ENCODE measurements at regions of chr2 and their contacts with region 1.

Region 1: DNA sequence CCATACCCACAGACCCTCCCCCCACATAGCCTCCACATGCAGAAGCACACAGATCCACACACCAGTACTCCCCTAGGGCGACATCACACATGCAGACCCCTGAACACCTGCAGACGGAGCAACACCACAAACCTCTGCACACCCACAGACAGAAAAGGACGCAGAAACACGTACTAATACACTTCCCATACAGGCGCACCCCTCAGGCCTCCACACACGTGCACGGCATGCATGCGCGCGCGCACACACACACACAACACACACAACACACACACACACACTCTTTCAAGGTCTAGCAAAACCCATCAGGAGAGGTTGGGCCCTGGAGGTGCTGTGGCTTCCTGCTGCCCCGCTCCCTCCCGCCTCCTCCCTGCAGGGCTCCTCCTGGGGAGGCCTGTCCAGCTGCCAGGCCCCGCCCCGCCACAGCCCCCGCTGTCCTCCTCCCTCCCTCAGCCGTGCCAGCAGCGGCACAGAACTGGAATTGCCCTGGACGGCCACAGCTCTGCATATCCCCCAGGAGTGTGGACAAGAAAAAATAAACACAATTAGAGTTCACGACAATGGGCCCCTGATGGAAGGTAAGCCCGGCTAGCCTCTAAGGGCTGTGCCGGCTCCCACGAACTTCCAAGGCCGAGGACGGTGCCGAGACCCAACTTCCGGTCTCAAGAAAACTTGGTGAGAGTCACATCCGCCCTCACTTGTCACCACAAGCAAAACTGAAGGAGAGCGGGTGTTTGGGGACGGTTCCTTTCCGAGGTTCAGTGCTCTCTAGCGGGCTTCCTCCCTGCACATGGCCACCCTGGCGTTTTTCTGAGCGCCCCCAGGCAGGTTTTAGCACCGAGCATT is 6.8 kb downstream of the ZFP36L2 start:
- DNase-seq: peak; percentile 88
- H3K4me3 Mint-ChIP-seq: peak overlapping the region; percentile 93
- H3K27ac Mint-ChIP-seq: peak overlapping the region; percentile 83
- H3K4me1 Mint-ChIP-seq: peaks cover 22% of the 10 kb centered on the region
- H3K27me3 Mint-ChIP-seq: no peaks in the 10 kb centered on the region
- CTCF ChIP-seq: no peak

Region 2: GRCh38 chr2:42792583-42793333 is 426.8 kb before region 1 on chr2 and contains the start of gene HAAO:
- CTCF ChIA-PET with region 1: no interaction called
- POLR2A ChIA-PET with region 1: no interaction called
- intact Hi-C with region 1: no loop called
- DNase-seq: no peak
- H3K4me3 Mint-ChIP-seq: no peak within 1 kb of the TSS
- H3K27ac Mint-ChIP-seq: no peak within 1 kb of the TSS
- H3K4me1 Mint-ChIP-seq: peaks cover 13% of the 10 kb centered on the region
- H3K27me3 Mint-ChIP-seq: no peaks in the 10 kb centered on the region
- CTCF ChIP-seq: no peak
- total RNA-seq, gene HAAO: not detected in 2 replicates

Region 3: GRCh38 chr2:42944779-42945415 is 274.7 kb before region 1 on chr2:
- CTCF ChIA-PET with region 1: interaction called, 25 read pairs
- POLR2A ChIA-PET with region 1: interaction called, 11 read pairs
- intact Hi-C with region 1: no loop called
- DNase-seq: no peak
- H3K4me3 Mint-ChIP-seq: no peak overlapping the region
- H3K27ac Mint-ChIP-seq: no peak overlapping the region
- H3K4me1 Mint-ChIP-seq: peaks cover 10% of the 10 kb centered on the region
- H3K27me3 Mint-ChIP-seq: no peaks in the 10 kb centered on the region
- CTCF ChIP-seq: no peak

Region 4: DNA sequence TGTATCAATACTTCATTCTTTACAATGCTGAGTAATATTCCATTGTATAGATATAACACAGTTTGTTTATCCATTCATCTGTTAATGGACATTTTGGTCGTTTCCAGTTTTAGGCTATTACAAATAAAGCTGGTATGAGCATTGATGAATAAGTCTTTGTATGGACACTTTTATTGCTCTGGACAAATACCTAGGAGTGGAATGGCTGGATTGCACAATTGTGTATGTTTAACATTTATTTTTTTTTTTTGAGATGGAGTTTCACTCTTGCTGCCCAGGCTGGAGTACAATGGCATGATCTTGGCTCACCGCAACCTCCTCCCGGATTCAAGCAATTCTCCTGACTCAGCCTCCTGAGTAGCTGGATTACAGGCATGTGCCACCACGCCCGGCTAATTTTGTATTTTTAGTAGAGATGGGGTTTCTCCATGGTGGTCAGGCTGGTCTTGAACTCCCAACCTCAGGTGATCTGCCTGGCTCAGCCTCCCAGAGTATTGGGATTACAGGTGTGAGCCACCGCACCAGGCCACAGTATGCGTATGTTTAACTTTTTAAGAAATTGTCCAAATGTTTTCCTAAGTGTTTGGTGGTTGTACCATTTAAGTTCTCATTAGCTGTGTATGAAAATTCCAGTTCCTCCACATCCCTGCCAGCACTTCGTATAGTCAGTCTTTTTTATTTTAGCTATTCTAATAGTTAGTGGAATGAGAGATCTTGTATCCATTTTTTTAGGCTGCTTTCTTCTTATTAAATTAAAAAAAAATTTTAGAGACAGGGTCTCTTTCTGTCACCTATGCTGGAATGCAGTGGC is 232.3 kb before region 1 on chr2:
- CTCF ChIA-PET with region 1: interaction called, 3 read pairs
- POLR2A ChIA-PET with region 1: interaction called, 28 read pairs
- intact Hi-C with region 1: no loop called
- DNase-seq: peak; percentile 88
- H3K4me3 Mint-ChIP-seq: no peak overlapping the region
- H3K27ac Mint-ChIP-seq: peak overlapping the region; percentile 90
- H3K4me1 Mint-ChIP-seq: peaks cover 19% of the 10 kb centered on the region
- H3K27me3 Mint-ChIP-seq: no peaks in the 10 kb centered on the region
- CTCF ChIP-seq: no peak

Region 5: DNA sequence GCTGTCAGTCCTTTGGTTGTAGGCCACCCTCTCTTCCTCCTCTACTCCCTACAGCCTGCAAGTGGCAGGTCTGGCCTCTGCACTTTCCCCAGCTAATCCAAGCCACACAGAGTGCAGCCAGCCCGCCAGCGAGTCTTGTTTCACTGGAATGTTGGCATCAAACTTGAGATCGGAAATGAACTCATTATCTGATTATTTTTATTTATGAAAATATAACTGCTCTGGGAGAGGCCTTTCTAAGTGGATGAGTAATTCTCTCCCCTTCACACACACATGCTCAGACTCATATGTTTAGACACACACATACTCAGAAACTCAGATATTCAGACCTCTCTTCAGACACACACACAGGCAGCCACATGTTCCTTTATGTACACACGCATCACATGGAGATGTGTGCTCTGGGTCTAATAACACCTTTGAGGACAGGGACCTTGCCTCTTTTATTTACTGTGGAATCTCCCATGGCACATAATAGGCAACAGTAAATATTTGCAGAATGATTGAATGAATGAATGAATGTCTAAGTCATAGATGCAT is 144.5 kb before region 1 on chr2:
- CTCF ChIA-PET with region 1: interaction called, 7 read pairs
- POLR2A ChIA-PET with region 1: interaction called, 64 read pairs
- intact Hi-C with region 1: no loop called
- DNase-seq: peak; percentile 96
- H3K4me3 Mint-ChIP-seq: peak overlapping the region; percentile 76
- H3K27ac Mint-ChIP-seq: peak overlapping the region; percentile 89
- H3K4me1 Mint-ChIP-seq: peaks cover 64% of the 10 kb centered on the region
- H3K27me3 Mint-ChIP-seq: no peaks in the 10 kb centered on the region
- CTCF ChIP-seq: no peak

Region 6: GRCh38 chr2:43158259-43158880 is 61.2 kb before region 1 on chr2:
- CTCF ChIA-PET with region 1: interaction called, 6 read pairs
- POLR2A ChIA-PET with region 1: interaction called, 60 read pairs
- intact Hi-C with region 1: loop called (anchors 1 kb)
- DNase-seq: peak; percentile 92
- H3K4me3 Mint-ChIP-seq: peak overlapping the region; percentile 62
- H3K27ac Mint-ChIP-seq: peak overlapping the region; percentile 98
- H3K4me1 Mint-ChIP-seq: peaks cover 57% of the 10 kb centered on the region
- H3K27me3 Mint-ChIP-seq: no peaks in the 10 kb centered on the region
- CTCF ChIP-seq: no peak

Region 7: DNA sequence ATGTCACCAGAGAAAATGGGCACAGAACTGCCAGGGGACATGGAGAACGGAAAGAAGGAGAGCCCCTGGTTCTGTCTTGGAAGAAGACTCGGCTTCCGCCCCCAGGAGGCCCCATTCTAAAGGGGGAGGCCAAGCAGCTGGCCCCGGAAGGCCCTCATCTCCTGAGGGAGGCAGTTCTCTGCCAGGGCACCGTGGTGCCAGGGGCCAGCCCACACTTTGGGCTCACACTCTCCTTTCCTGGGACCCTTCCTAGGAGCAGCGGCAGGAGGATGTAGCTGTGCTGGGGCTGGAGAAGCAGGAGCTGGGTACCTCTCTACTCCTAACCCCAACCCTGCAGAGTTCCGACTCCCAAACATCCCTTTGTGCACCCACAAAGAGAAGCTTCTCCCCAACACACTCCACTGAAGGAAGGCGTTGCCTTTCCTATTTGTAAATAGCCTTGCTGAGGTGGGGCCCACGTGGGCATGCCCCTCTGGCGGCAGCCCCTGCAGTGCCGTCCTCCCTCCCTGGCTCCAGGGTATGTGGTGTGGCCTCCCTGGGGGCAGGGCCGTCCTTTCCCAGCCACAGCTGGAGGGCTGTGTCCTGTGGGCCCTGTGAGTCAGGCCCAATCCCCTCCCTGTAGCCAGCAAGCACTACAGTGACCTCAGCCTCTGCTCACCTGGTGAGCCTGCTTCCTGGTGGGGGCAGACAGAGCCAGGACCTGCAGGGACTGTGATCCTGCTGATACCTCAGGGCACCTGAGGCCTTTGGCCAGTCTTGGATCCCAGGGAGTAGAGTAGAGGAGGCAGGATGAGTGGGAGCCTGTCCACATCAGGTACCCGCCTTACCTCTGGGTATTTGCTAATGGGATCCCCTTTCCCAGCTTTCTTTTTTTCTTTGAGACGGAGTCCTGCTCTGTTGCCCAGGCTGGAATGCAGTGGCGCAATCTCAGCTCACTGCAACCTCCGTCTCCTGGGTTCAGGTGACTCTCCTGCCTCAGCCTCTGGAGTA is 19.8 kb before region 1 on chr2:
- CTCF ChIA-PET with region 1: interaction called, 4 read pairs
- POLR2A ChIA-PET with region 1: interaction called, 19 read pairs
- intact Hi-C with region 1: no loop called
- DNase-seq: peak; percentile 70
- H3K4me3 Mint-ChIP-seq: no peak overlapping the region
- H3K27ac Mint-ChIP-seq: peak overlapping the region; percentile 76
- H3K4me1 Mint-ChIP-seq: peaks cover 15% of the 10 kb centered on the region
- H3K27me3 Mint-ChIP-seq: no peaks in the 10 kb centered on the region
- CTCF ChIP-seq: no peak

Region 8: DNA sequence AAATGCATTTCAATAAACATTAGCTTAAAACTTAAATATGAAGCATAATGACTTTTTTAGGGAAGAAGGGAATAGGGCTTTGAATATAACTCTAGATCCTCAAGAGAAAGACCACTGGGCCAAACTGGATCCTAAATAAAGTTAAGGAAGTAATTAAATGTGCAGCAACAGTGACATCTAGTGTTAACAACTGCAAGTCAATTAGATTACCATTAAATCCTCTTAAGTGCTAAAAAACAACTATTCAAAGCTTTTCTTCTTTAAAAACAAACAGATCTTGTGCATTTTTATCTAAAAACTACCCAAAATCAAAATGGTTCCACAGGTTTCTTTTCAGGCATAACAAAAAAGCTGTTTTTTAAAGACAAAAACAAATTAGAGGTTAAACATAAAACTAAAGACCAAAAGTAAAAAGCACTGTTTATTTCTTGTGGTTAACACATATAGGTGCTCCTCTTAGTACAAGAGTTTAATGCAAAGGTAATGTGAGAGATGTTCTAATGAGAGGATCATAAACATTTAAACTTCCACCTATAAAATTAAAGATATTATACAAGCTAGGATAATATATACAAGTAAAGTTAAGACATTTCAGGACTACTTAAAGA is 264.8 kb after region 1 on chr2:
- CTCF ChIA-PET with region 1: interaction called, 12 read pairs
- POLR2A ChIA-PET with region 1: interaction called, 89 read pairs
- intact Hi-C with region 1: no loop called
- DNase-seq: peak; percentile 74
- H3K4me3 Mint-ChIP-seq: no peak overlapping the region
- H3K27ac Mint-ChIP-seq: peak overlapping the region; percentile 96
- H3K4me1 Mint-ChIP-seq: peaks cover 37% of the 10 kb centered on the region
- H3K27me3 Mint-ChIP-seq: no peaks in the 10 kb centered on the region
- CTCF ChIP-seq: peak; percentile 59